ENCODE measurements at regions of chr20 and their contacts with region 1.

Region 1: GRCh38 chr20:11740975-11741374 is 176.7 kb upstream of the BTBD3 start:
- DNase-seq: no peak
- H3K4me3 ChIP-seq: no peak overlapping the region
- H3K27me3 ChIP-seq: no peaks in the 10 kb centered on the region
- CTCF ChIP-seq: no peak

Region 2: GRCh38 chr20:11650566-11650965 is 90.4 kb before region 1 on chr20:
- CTCF ChIA-PET with region 1: no interaction called
- POLR2A ChIA-PET with region 1: interaction called, 10 read pairs
- DNase-seq: no peak
- H3K4me3 ChIP-seq: no peak overlapping the region
- H3K27me3 ChIP-seq: no peaks in the 10 kb centered on the region
- CTCF ChIP-seq: no peak

Region 3: DNA sequence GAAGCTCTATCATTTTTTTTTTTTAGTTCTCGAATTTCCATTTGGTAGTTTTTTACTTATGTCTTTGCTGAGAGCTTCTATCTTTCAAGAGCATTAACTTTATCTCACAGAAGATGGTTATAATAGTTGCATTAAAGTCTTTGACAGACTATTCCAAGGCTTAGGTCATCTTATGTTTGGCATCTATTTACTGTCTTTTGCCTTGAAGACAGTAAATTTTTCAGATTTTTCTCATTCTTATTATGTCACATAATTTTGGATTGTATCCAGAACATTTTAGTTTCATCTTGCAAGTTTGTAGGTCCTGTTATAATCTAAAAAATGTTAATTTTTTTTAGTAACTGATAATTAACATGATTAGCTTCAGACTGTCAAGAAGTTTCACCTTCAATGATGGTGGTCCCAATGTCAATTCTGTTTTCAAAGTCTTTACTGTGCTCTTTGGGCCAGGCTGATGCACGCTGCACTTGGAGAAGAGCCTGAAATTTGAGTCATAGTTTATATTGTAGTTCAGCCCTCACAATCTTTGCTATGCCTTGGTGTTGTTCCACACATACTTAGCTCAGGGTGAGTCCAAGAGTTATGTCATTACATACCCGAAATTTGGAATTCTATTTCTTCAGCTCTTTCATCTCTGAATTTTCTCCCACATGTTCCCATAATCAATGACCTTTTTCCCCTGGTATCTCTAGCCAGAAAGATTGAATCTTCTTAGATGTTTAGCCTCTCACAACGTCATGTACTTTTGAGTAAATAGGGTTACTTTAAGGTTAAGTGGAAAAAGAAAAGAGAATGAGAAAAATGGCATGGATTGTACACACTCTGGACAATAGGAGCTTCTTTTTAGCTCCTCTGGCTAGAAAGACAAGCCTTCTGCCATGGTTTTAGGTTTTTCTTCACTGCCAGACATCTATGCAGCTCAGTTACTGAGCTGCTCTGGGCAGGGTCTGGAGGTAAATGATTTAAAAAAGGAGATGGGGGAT is 66.4 kb after region 1 on chr20:
- CTCF ChIA-PET with region 1: no interaction called
- POLR2A ChIA-PET with region 1: no interaction called
- DNase-seq: peak; percentile 83
- H3K4me3 ChIP-seq: no peak overlapping the region
- H3K27me3 ChIP-seq: no peaks in the 10 kb centered on the region
- CTCF ChIP-seq: no peak